Tibial artery (tissue), 4 donors: ENCODE measurements at regions of chr11 and their contacts with region 1.

Region 1: GRCh38 chr11:114762408-114762807 is 84.1 kb downstream of the NXPE2 start:
- DNase-seq: peak; percentile 50 to 74
- H3K4me3 ChIP-seq: no peak overlapping the region
- H3K27ac ChIP-seq: no peak overlapping the region
- H3K4me1 ChIP-seq: no peaks in the 10 kb centered on the region
- H3K27me3 ChIP-seq: no peaks in the 10 kb centered on the region
- CTCF ChIP-seq: peak; percentile 70 to 79

Region 2: GRCh38 chr11:114280696-114281095 is 481.7 kb before region 1 on chr11:
- intact Hi-C with region 1: loop called (anchors 5 kb)
- DNase-seq: peak; percentile 58 to 83
- H3K4me3 ChIP-seq: no peak overlapping the region
- H3K27ac ChIP-seq: peak overlapping the region; percentile 66 to 67
- H3K4me1 ChIP-seq: peaks cover 0 to 32% (median 15%) of the 10 kb centered on the region in 4 donors
- H3K27me3 ChIP-seq: no peaks in the 10 kb centered on the region
- CTCF ChIP-seq: peak; percentile 62 to 63

Region 3: GRCh38 chr11:114340311-114341131 is 421.9 kb before region 1 on chr11:
- intact Hi-C with region 1: loop called (anchors 10 kb)
- DNase-seq: peak; percentile 49 to 71
- H3K4me3 ChIP-seq: peak overlapping the region; percentile 15 to 24
- H3K27ac ChIP-seq: peak overlapping the region in 1 of 2 donors; percentile 37
- H3K4me1 ChIP-seq: peaks cover 0 to 11% (median 5%) of the 10 kb centered on the region in 4 donors
- H3K27me3 ChIP-seq: no peaks in the 10 kb centered on the region
- CTCF ChIP-seq: peak; percentile 82 to 84

Region 4: DNA sequence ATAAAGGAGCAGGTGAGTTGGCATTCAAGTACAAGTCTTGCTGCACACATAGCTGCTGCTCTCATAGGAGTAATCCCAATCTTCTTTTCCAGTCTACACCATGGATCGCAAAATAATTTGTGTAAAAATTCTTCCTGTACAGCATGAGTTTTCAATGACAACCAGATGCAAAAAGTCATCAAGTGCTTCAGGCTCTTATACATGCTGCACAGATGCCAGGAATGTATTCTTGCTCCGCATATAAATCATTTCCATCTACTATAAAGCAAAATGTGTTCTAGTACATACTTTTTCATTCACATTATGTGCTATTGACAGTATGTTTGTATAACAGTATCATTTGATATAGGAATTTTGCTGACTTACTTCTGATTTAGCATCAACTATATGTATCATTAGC is 48.7 kb before region 1 on chr11:
- intact Hi-C with region 1: no loop called
- DNase-seq: no peak
- H3K4me3 ChIP-seq: no peak overlapping the region
- H3K27ac ChIP-seq: no peak overlapping the region
- H3K4me1 ChIP-seq: no peaks in the 10 kb centered on the region
- H3K27me3 ChIP-seq: no peaks in the 10 kb centered on the region
- CTCF ChIP-seq: no peak

Region 5: GRCh38 chr11:114845766-114846415 is 83.5 kb after region 1 on chr11:
- intact Hi-C with region 1: no loop called
- DNase-seq: no peak
- H3K4me3 ChIP-seq: no peak overlapping the region
- H3K27ac ChIP-seq: no peak overlapping the region
- H3K4me1 ChIP-seq: no peaks in the 10 kb centered on the region
- H3K27me3 ChIP-seq: no peaks in the 10 kb centered on the region
- CTCF ChIP-seq: no peak